Panc1 (cell line): ENCODE measurements at regions of chrX and their contacts with region 1.

Region 1: DNA sequence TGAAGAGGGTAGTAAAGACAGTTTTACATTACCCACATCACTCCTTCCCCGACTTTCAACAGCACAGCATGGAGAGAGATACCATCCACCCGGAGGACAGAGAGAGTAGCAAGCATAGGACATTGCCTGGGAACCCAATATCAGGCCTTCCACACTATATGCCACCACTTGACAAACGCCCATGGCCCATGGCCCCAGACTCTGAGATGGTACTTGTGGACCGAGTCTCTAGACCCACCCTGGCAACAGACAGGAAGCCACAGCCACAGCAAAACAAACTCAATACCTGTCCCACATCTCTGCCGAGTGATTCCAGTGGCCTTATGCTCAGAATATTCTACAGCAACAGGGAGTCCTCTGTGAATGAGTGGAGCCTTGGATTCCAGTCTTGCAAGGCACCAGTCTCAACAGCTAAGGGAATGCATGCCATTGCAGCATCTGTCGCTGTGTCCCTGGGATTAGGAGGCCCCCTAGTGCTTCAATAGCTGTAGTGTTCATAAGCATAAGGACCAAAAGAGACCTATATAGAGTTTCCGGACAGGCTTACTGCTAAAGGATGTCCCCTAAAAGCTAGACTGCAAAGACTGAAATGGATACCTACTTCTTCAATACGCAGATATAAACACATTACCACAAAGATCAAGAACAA is 14.7 kb upstream of the CT55 start:
- DNase-seq: peak; percentile 54
- ATAC-seq: peak; percentile 100
- H3K4me3 ChIP-seq: no peak overlapping the region
- H3K27ac ChIP-seq: no peak overlapping the region
- H3K4me1 ChIP-seq: 0 out of 2 replicates have a peak, but pooled peaks cover 4% of the 10 kb centered on the region
- H3K27me3 ChIP-seq: peaks cover 24% of the 10 kb centered on the region
- CTCF ChIP-seq: peak; percentile 66

Region 2: DNA sequence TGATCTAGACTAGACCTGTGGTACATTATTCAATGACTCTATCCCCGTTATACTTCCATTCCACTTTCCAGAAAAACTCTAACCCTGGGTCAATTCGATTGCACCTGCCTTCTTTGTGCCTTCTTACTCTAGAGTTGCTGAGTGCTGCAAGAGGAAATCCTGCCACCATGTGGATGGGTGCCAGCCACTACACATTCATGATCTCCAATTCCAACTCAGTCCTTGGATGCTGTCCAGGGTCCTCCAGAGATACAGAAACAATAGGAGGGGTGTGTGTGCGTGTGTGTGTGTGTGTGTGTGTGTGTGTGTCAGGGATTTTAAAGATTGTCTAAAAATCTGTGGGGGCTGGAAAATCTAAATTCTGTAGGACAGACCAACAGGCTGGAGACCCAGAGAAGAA is 291.7 kb after region 1 on chrX:
- CTCF ChIA-PET with region 1: no interaction called
- POLR2A ChIA-PET with region 1: no interaction called
- in situ Hi-C with region 1: no loop called
- intact Hi-C with region 1: loop called (anchors 1 kb)
- DNase-seq: peak; percentile 15
- ATAC-seq: peak; percentile 89
- H3K4me3 ChIP-seq: no peak overlapping the region
- H3K27ac ChIP-seq: no peak overlapping the region
- H3K4me1 ChIP-seq: no peaks in the 10 kb centered on the region
- H3K27me3 ChIP-seq: peaks cover 4% of the 10 kb centered on the region; the same call in 1 of the 2 replicates
- CTCF ChIP-seq: peak; percentile 64